ENCODE measurements at regions of chr11 and their contacts with region 1.

Region 1: DNA sequence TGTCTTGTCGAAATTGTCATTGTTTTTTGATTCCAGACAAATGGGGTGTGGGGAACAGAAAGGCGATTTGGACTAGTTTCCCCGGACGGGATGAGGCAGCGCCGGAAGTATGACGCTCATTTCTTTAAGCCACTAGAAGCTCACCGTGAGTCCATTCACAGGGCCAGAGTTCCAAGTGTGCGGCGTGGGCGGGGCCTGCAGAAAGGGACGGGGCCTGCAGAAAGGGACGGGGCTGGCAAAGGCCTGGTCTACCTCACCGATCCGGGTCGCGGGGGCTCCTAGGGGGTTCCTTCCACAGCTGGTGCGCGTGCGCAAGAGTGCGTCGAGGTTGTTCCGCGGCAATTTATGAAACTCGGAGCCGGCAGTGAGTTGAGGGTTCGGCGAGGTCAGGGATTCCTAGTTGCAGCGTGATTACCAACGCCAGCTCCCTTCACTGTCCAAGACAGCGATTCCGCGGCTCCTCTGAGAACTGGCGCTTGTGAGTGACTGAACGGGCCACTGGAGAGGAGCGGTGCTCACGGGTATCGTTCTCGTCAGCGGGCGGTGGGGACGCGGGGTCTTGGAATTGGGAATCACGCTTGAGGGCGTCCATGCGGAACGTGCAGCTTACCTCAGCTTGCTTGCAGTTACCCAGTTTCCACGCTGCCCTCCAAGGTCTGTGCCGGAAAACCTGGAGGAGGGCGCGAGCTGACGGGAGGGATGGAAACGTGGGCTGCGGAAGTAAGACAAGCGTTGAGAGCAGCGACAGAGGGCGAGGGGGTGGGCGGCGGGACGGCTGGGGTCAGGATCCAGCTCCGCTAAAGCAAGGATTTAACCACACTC is at the start of gene ZNF215:
- DNase-seq: peak; percentile 85
- H3K4me3 ChIP-seq: peak within 1 kb of the TSS; percentile 43 to 70 (median 56)
- H3K27ac ChIP-seq: peak within 1 kb of the TSS; percentile 38 to 67 (median 64)
- H3K4me1 ChIP-seq: peaks cover 0 to 15% (median 10%) of the 10 kb centered on the region in 4 donors
- H3K27me3 ChIP-seq: no peaks in the 10 kb centered on the region
- CTCF ChIP-seq: no peak
- EP300 ChIP-seq: no peak
- POLR2A ChIP-seq: no peak
- total RNA-seq, gene ZNF215: 0.41 to 3.0 (median 0.78) TPM

Region 2: DNA sequence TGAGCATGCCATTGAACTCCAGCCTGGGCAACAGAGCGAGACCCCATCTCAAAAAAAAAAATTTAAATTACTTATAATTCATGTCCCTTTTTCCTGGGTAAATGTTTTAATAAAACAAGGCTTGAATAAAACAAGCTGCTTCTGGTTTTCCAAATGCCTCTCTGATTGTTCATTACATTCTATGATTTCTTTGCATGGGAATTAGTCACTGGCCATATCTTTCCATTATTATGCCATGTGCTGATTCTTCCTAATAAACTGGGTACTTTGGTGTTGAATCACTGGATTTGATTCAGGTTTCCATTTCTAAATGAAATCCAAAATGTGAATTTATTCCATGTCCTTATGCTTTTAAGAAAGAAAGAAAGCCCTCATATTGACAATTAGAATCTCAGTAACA is 42.4 kb after region 1 on chr11:
- intact Hi-C with region 1: no loop called
- DNase-seq: no peak
- H3K4me3 ChIP-seq: no peak overlapping the region
- H3K27ac ChIP-seq: no peak overlapping the region
- H3K4me1 ChIP-seq: no peaks in the 10 kb centered on the region
- H3K27me3 ChIP-seq: no peaks in the 10 kb centered on the region
- CTCF ChIP-seq: no peak
- EP300 ChIP-seq: no peak
- POLR2A ChIP-seq: no peak

Region 3: GRCh38 chr11:6992457-6993417 is 66.3 kb after region 1 on chr11:
- intact Hi-C with region 1: loop called (anchors 10 kb)
- DNase-seq: no peak
- H3K4me3 ChIP-seq: peak overlapping the region in 2 of 4 donors; percentile 11 to 22
- H3K27ac ChIP-seq: peak overlapping the region; percentile 31 to 80 (median 70)
- H3K4me1 ChIP-seq: peaks cover 0 to 15% (median 12%) of the 10 kb centered on the region in 4 donors
- H3K27me3 ChIP-seq: no peaks in the 10 kb centered on the region
- CTCF ChIP-seq: no peak
- EP300 ChIP-seq: peak in 2 of 4 donors; percentile 36 to 80
- POLR2A ChIP-seq: no peak

Region 4: DNA sequence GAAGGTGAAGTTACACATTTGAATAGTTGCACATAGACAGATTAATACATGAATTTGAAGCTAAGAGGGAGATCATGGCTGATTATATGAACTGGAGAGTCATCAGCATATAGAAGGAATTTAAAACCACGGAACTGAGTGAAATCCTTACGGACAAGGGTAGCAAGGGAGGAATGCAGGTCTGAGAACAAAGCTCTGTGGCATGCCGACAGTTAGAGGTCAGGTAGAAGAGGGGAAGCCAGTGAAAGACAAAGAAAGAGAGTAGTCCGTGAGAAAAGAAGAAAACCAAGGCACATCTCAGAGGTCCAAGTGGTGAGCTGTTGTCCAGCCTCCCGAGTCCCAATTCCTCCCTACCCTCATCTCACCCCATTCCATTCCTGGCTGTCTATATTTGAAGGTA is 313.5 kb after region 1 on chr11:
- intact Hi-C with region 1: no loop called
- DNase-seq: no peak
- H3K4me3 ChIP-seq: no peak overlapping the region
- H3K27ac ChIP-seq: no peak overlapping the region
- H3K4me1 ChIP-seq: no peaks in the 10 kb centered on the region
- H3K27me3 ChIP-seq: no peaks in the 10 kb centered on the region
- CTCF ChIP-seq: no peak
- EP300 ChIP-seq: no peak
- POLR2A ChIP-seq: no peak

Measured in sigmoid colon (tissue), 7 donors.